Motor neuron (in vitro differentiated cells): ENCODE measurements at regions of chr5 and their contacts with region 1.

Region 1: GRCh38 chr5:75681125-75681830 is 36.0 kb downstream of the POC5 start:
- ATAC-seq: peak in 3 of 8 experiments; percentile 55 to 94 (median 85)
- H3K4me3 ChIP-seq: no peak overlapping the region
- H3K27ac ChIP-seq: no peak overlapping the region
- H3K4me1 ChIP-seq: no peaks in the 10 kb centered on the region

Region 2: DNA sequence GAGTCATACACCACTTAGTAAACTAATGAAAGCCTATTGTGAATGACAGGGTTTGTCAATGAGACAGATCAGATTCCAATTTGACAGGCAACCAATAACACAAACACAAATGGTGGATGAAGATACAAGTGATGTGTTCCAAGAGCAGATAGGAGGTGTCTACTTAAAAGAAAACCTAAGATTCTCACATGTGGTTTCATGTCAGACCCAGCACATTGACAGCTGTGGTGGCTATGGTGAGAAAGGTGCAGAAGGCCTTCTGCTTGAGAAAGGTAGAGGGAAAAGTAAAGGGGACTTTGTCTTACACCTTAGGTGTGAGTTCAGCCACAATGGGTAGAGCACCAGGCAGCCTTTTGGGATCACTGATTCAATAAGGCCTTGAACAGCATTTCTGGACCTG is 455.8 kb before region 1 on chr5:
- in situ Hi-C with region 1: no loop called
- ATAC-seq: no peak
- H3K4me3 ChIP-seq: no peak overlapping the region
- H3K27ac ChIP-seq: no peak overlapping the region
- H3K4me1 ChIP-seq: no peaks in the 10 kb centered on the region

Region 3: GRCh38 chr5:75395277-75395676 is 286.0 kb before region 1 on chr5:
- in situ Hi-C with region 1: loop called in 1 of 9 experiments (anchors 25 kb)
- ATAC-seq: no peak
- H3K4me3 ChIP-seq: no peak overlapping the region
- H3K27ac ChIP-seq: no peak overlapping the region
- H3K4me1 ChIP-seq: no peaks in the 10 kb centered on the region